ENCODE measurements at regions of chr10 and their contacts with region 1.

Region 1: GRCh38 chr10:12348870-12349628 is at the start of gene CAMK1D:
- DNase-seq: peak; percentile 91
- H3K4me3 ChIP-seq: peak within 1 kb of the TSS; percentile 62 to 99 (median 92)
- H3K27ac ChIP-seq: peak within 1 kb of the TSS; percentile 90 to 95 (median 90)
- H3K4me1 ChIP-seq: peaks cover 8 to 25% (median 20%) of the 10 kb centered on the region in 4 donors
- H3K27me3 ChIP-seq: no peaks in the 10 kb centered on the region
- CTCF ChIP-seq: peak in 4 of 5 experiments; percentile 13 to 51 (median 38)
- EP300 ChIP-seq: no peak
- POLR2A ChIP-seq: peak; percentile 60
- total RNA-seq, gene CAMK1D: 13.5 to 21.4 (median 15.7) TPM

Region 2: DNA sequence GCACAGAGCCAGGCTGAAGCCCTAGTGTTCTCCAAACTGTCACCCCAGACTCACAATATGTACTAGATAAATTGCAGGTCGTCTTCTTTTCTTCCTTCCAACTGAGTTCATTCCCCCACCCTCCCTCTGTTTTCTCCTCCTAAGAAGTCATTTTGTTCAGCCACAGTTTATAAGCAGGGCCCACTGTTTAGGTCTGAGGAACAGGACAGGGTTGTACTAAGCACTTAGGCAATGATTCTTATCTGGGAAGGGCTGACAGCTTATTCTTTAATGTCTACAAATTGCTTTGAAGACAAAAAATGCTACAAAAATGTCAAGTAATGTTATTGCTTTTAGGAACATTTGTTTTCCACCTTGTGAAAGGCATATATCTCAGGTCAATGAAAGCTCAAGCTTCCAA is 94.0 kb before region 1 on chr10:
- in situ Hi-C with region 1: no loop called
- intact Hi-C with region 1: loop called (anchors 5 kb)
- DNase-seq: no peak
- H3K4me3 ChIP-seq: no peak overlapping the region
- H3K27ac ChIP-seq: peak overlapping the region in 1 of 4 donors; percentile 24
- H3K4me1 ChIP-seq: no peaks in the 10 kb centered on the region
- H3K27me3 ChIP-seq: no peaks in the 10 kb centered on the region
- CTCF ChIP-seq: no peak
- EP300 ChIP-seq: no peak
- POLR2A ChIP-seq: no peak

Region 3: GRCh38 chr10:12381536-12382156 is 32.6 kb after region 1 on chr10:
- in situ Hi-C with region 1: no loop called
- intact Hi-C with region 1: no loop called
- DNase-seq: no peak
- H3K4me3 ChIP-seq: no peak overlapping the region
- H3K27ac ChIP-seq: no peak overlapping the region
- H3K4me1 ChIP-seq: peaks cover 0 to 13% (median 3%) of the 10 kb centered on the region in 4 donors
- H3K27me3 ChIP-seq: no peaks in the 10 kb centered on the region
- CTCF ChIP-seq: no peak
- EP300 ChIP-seq: no peak
- POLR2A ChIP-seq: no peak

Region 4: DNA sequence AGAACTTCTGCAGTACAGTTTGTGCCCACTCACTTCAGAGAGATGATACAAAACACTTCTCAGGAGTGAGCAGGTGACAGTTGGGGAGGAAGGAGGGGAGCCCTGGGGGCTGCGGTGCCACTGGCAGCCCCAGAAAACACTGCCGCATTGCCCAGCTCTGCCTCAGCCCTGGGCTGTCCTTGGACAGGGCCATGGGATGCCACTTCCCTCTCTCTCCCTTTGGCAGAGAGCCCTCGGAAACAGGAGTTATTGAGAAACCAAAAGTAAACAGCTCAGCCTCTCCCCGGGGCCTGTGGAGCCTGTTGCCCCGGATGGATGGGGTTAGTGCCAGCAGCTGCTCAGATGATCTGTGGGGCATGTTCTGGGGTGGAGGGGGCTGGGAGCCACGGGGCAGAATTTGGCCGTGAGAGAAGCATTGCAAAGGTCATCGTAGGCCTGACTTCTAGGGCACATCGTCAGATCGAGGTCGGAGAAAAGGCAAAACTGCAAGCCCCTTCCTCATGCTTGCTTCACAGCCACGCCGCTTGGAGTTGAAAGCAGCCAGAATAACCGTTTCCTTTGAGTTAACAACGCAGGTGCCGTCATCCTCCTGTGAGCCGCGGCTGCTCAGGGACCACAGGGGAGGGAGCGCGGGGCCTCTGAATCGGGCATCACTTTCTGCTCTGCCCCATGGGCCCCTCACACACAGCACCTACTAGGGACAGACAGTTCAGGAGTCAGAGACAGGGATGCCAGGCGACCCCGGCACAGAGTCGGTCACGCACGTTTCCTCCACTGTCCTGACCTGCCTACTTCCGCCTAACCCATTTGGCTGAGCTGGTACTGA is 256.7 kb after region 1 on chr10:
- in situ Hi-C with region 1: no loop called
- intact Hi-C with region 1: loop called (anchors 10 kb)
- DNase-seq: peak; percentile 86
- H3K4me3 ChIP-seq: peak overlapping the region in 3 of 4 donors; percentile 13 to 35 (median 27)
- H3K27ac ChIP-seq: peak overlapping the region; percentile 78 to 87 (median 82)
- H3K4me1 ChIP-seq: peaks cover 20 to 35% (median 28%) of the 10 kb centered on the region in 4 donors
- H3K27me3 ChIP-seq: no peaks in the 10 kb centered on the region
- CTCF ChIP-seq: no peak
- EP300 ChIP-seq: no peak
- POLR2A ChIP-seq: peak; percentile 27

Region 5: DNA sequence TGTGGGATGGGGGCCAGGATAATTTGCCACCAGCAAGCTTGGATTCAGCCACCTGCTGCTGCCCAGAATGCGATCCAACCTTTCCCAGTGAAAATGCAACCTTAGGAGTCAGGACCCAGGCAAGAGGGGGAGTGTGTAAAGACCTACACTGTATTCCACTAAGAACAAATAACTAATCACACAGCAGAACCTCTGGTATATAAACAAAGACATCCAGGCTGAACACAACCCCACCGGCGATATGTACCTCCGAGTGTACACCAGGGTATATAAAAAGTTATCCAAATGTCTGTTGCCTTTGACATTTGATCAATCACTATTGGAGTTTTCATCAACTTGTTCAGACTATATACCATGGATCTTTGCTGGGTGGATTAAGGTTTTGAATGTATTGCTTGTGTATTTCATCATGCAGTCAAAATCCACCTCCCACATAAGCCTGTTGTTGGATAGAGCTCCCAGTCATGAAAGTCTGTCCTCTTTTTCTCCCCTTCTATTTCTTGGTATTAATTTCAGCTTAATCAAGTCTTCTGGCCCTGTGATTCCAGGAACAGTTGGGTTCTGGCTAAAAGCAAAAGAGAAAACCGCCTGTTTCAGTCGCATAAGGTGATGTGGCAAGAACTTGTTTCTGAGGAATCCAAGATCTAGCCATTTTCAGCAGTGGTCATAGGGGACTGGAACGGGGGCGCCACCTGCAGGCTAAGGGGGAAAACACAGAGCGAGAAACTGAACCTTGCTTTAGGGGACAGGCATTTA is 361.7 kb after region 1 on chr10:
- in situ Hi-C with region 1: no loop called
- intact Hi-C with region 1: loop called (anchors 10 kb)
- DNase-seq: peak; percentile 83
- H3K4me3 ChIP-seq: no peak overlapping the region
- H3K27ac ChIP-seq: peak overlapping the region; percentile 72 to 81 (median 78)
- H3K4me1 ChIP-seq: peaks cover 28 to 49% (median 39%) of the 10 kb centered on the region in 4 donors
- H3K27me3 ChIP-seq: no peaks in the 10 kb centered on the region
- CTCF ChIP-seq: peak; percentile 87 to 94 (median 90)
- EP300 ChIP-seq: no peak
- POLR2A ChIP-seq: no peak